ENCODE measurements at regions of chr1 and their contacts with region 1.

Region 1: DNA sequence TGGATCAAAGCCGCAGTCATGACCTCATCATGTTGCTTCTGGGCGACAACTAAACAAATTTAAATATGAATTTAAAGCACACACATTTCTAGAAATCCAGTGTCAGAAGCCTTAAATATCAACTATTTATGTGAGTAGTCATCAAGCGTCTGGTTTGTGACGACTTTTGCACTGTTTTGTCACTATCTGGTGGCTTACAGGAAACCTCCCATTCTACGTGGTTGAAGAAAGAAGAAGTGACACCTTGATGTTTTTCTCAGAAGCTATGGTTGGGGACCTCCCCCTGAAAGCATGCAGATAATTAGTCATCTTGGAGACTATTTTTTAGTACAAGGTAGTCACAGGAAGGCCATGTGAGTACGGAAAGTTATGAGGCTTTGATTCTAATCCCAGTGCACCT is 58.5 kb downstream of the TENT5C start:
- DNase-seq: peak in 8 of 9 donors; percentile 49 to 87 (median 83)
- ATAC-seq: peak; percentile 88
- H3K4me3 ChIP-seq: peak overlapping the region; percentile 5
- H3K4me3 Mint-ChIP-seq: peak overlapping the region in 7 of 10 donors; percentile 19 to 60 (median 37)
- H3K27ac ChIP-seq: no peak overlapping the region
- H3K27ac Mint-ChIP-seq: peak overlapping the region; percentile 74 to 97 (median 93)
- H3K4me1 ChIP-seq: peaks cover 38 to 71% of the 10 kb centered on the region in 2 donors
- H3K4me1 Mint-ChIP-seq: peaks cover 35 to 81% (median 66%) of the 10 kb centered on the region in 7 donors
- H3K27me3 ChIP-seq: no peaks in the 10 kb centered on the region
- H3K27me3 Mint-ChIP-seq: peaks cover 0 to 15% (median 4%) of the 10 kb centered on the region in 5 donors

Region 2: GRCh38 chr1:116667575-116668105 is 996.7 kb before region 1 on chr1 and contains the start of gene IGSF3:
- CTCF ChIA-PET with region 1: no interaction called
- POLR2A ChIA-PET with region 1: no interaction called
- intact Hi-C with region 1: no loop called
- DNase-seq: peak in 1 of 9 donors; percentile 66
- ATAC-seq: peak; percentile 80
- H3K4me3 ChIP-seq: peak within 1 kb of the TSS; percentile 51
- H3K4me3 Mint-ChIP-seq: peak within 1 kb of the TSS; percentile 81 to 85 (median 84)
- H3K27ac ChIP-seq: no peak within 1 kb of the TSS
- H3K27ac Mint-ChIP-seq: peak within 1 kb of the TSS in 1 of 9 donors; percentile 38
- H3K4me1 ChIP-seq: peaks cover 0 to 11% of the 10 kb centered on the region in 2 donors
- H3K4me1 Mint-ChIP-seq: peaks cover 5 to 14% (median 11%) of the 10 kb centered on the region in 7 donors
- H3K27me3 ChIP-seq: peaks cover 0 to 9% of the 10 kb centered on the region in 2 donors
- H3K27me3 Mint-ChIP-seq: peaks cover 53 to 78% (median 59%) of the 10 kb centered on the region in 5 donors
- total RNA-seq, gene IGSF3: 0.08 to 0.63 (median 0.24) TPM in 3 of 5 experiments, not detected in the others

Region 3: GRCh38 chr1:116763787-116764465 is 900.4 kb before region 1 on chr1:
- CTCF ChIA-PET with region 1: no interaction called
- POLR2A ChIA-PET with region 1: no interaction called
- intact Hi-C with region 1: loop called in 1 of 2 experiments (anchors 2 kb)
- DNase-seq: peak in 2 of 9 donors; percentile 64 to 66
- ATAC-seq: peak; percentile 10
- H3K4me3 ChIP-seq: peak overlapping the region; percentile 17
- H3K4me3 Mint-ChIP-seq: peak overlapping the region; percentile 79 to 99 (median 85)
- H3K27ac ChIP-seq: peak overlapping the region; percentile 89
- H3K27ac Mint-ChIP-seq: peak overlapping the region; percentile 93 to 100 (median 97)
- H3K4me1 ChIP-seq: peaks cover 94 to 100% of the 10 kb centered on the region in 2 donors
- H3K4me1 Mint-ChIP-seq: peaks cover 74 to 100% (median 94%) of the 10 kb centered on the region in 7 donors
- H3K27me3 ChIP-seq: no peaks in the 10 kb centered on the region
- H3K27me3 Mint-ChIP-seq: no peaks in the 10 kb centered on the region

Region 4: DNA sequence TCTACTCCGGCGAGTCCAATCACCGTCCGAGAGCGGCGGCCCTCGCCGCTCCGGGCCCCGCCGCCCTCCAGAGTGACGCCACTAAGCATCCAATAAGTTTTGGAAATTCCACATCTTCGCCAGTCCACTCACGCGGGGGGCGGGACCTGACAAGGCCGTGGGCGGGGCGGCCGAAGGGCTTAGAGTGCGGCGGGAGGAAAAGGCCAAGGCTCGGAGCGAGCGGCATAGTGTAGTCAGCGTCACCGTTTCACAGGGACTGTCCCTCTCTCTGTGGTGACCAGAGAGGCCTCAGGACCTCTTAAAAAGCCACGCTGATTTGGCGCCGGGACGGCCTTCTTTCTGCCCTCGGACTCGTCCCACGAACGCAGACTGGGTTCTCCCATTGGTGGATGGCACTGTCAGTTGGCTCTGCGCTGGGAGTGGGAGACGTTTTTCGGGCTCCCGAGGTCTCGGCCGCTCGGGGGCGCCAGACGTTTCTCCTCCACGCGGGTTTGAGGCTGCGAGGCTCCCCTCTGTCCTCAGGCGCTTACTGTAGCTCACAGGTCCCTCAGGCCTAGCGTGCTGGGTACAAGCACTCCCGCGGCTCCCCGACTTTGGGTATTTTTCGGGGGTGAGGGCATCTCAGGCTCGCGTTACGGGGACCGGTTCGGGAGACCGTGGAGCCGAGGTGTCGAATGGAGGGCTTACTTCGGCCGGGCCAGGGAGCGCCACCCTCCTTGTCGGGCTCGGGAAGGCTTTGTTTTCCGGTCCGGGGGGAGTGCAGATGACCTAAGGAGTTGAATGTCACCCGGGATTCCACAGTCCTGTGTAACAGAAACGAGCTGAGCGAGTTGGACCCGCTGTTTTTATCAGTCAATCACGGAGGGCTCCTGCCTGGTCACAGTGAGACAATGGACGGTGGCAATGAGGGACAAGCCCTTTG is 542.3 kb before region 1 on chr1:
- CTCF ChIA-PET with region 1: no interaction called
- POLR2A ChIA-PET with region 1: no interaction called
- intact Hi-C with region 1: loop called in 1 of 2 experiments (anchors 10 kb)
- DNase-seq: peak; percentile 64 to 81 (median 74)
- ATAC-seq: peak; percentile 90
- H3K4me3 ChIP-seq: peak overlapping the region; percentile 97
- H3K4me3 Mint-ChIP-seq: peak overlapping the region; percentile 83 to 90 (median 87)
- H3K27ac ChIP-seq: peak overlapping the region; percentile 61
- H3K27ac Mint-ChIP-seq: peak overlapping the region in 2 of 9 donors; percentile 16 to 53
- H3K4me1 ChIP-seq: peaks cover 0 to 4% of the 10 kb centered on the region in 2 donors
- H3K4me1 Mint-ChIP-seq: peaks cover 0 to 13% (median 4%) of the 10 kb centered on the region in 7 donors
- H3K27me3 ChIP-seq: no peaks in the 10 kb centered on the region
- H3K27me3 Mint-ChIP-seq: peaks cover 5 to 21% (median 6%) of the 10 kb centered on the region in 5 donors

Region 5: DNA sequence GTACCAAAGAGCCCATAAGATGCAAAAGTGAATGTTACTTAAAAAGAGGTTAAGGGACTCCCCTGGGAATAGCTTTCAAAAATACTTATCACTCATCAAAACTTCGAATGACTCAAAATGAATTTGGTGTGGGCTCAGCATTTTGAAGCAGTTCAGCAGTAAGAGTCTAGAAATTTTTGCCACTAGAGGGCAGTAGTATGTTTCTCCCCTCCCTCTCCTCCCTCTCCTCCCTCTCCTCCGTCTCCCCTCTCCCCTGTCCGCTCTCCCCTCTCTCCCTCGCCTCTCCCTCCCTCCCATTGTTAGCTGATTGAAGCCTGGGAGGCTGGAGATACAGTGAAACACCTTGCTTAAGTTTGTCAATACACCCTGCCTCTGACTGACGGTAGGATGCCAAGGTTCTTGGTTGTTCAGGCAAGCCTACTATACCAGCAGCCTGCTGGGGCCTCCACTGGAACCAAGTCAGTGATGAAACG is 129.3 kb before region 1 on chr1:
- CTCF ChIA-PET with region 1: interaction called, 118 read pairs
- POLR2A ChIA-PET with region 1: interaction called, 3 read pairs
- intact Hi-C with region 1: no loop called
- DNase-seq: peak; percentile 22 to 74 (median 60)
- ATAC-seq: peak; percentile 88
- H3K4me3 ChIP-seq: no peak overlapping the region
- H3K4me3 Mint-ChIP-seq: peak overlapping the region in 1 of 10 donors; percentile 17
- H3K27ac ChIP-seq: no peak overlapping the region
- H3K27ac Mint-ChIP-seq: peak overlapping the region in 4 of 9 donors; percentile 1 to 36 (median 14)
- H3K4me1 ChIP-seq: peaks cover 7 to 8% of the 10 kb centered on the region in 2 donors
- H3K4me1 Mint-ChIP-seq: peaks cover 0 to 9% (median 3%) of the 10 kb centered on the region in 7 donors
- H3K27me3 ChIP-seq: no peaks in the 10 kb centered on the region
- H3K27me3 Mint-ChIP-seq: no peaks in the 10 kb centered on the region

Region 6: GRCh38 chr1:117674521-117675397 is 10.4 kb after region 1 on chr1:
- CTCF ChIA-PET with region 1: interaction called, 7 read pairs
- POLR2A ChIA-PET with region 1: interaction called, 3 read pairs
- intact Hi-C with region 1: loop called in 1 of 2 experiments (anchors 1 kb)
- DNase-seq: peak in 7 of 9 donors; percentile 52 to 67 (median 58)
- ATAC-seq: peak; percentile 80
- H3K4me3 ChIP-seq: no peak overlapping the region
- H3K4me3 Mint-ChIP-seq: no peak overlapping the region
- H3K27ac ChIP-seq: no peak overlapping the region
- H3K27ac Mint-ChIP-seq: peak overlapping the region in 3 of 9 donors; percentile 53 to 68 (median 65)
- H3K4me1 ChIP-seq: peaks cover 0 to 5% of the 10 kb centered on the region in 2 donors
- H3K4me1 Mint-ChIP-seq: peaks cover 0 to 25% (median 4%) of the 10 kb centered on the region in 7 donors
- H3K27me3 ChIP-seq: no peaks in the 10 kb centered on the region
- H3K27me3 Mint-ChIP-seq: peaks cover 0 to 32% (median 0%) of the 10 kb centered on the region in 5 donors

Region 7: DNA sequence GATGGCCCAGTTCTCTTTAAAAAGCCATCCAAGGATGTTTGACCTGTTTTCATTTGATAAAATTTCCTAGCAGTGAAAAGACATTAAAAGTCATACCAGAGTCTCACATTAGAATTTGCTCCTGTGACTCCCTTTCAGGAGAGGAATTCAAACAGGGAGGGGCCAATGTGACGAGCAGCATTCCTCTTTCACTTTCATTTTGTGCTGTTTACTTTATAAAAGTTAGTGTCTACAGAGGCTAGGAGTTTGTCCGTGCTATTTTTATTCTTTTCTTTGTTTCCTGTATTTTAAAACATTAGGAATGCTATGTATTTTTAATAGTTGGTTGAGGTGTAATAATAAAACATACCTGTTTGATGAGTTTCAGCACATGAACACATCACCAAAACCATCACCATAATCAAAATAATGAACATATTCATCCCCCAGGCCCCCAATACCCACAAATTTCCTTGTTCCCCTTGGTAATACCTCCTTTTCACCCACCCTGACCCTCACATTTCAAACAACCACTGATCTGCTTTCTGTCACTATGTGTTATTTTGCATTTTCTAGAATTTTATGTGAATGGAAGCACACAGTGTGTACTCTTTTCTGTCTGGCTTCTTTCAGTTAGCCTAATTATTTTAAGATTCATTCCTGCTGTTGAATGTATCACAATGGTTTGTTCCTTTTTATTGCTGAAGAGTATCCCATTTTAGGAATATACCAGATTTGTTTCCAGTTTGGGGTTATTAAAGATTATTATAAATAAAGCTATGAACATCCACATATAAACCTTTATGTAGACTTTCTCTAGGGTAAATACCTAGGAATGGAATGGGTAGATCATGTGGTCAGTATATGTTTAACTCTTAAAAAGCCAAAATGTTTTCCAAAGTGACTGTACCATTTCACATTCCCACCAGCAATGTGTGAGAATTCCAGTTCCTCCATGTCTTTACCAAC is 71.0 kb after region 1 on chr1:
- CTCF ChIA-PET with region 1: no interaction called
- POLR2A ChIA-PET with region 1: no interaction called
- intact Hi-C with region 1: loop called in 1 of 2 experiments (anchors 5 kb)
- DNase-seq: peak in 7 of 9 donors; percentile 19 to 53 (median 44)
- ATAC-seq: peak; percentile 58
- H3K4me3 ChIP-seq: peak overlapping the region; percentile 59
- H3K4me3 Mint-ChIP-seq: peak overlapping the region; percentile 67 to 90 (median 81)
- H3K27ac ChIP-seq: peak overlapping the region; percentile 66
- H3K27ac Mint-ChIP-seq: peak overlapping the region; percentile 83 to 97 (median 92)
- H3K4me1 ChIP-seq: peaks cover 6 to 11% of the 10 kb centered on the region in 2 donors
- H3K4me1 Mint-ChIP-seq: peaks cover 14 to 23% (median 19%) of the 10 kb centered on the region in 7 donors
- H3K27me3 ChIP-seq: no peaks in the 10 kb centered on the region
- H3K27me3 Mint-ChIP-seq: peaks cover 0 to 11% (median 0%) of the 10 kb centered on the region in 5 donors

Region 8: DNA sequence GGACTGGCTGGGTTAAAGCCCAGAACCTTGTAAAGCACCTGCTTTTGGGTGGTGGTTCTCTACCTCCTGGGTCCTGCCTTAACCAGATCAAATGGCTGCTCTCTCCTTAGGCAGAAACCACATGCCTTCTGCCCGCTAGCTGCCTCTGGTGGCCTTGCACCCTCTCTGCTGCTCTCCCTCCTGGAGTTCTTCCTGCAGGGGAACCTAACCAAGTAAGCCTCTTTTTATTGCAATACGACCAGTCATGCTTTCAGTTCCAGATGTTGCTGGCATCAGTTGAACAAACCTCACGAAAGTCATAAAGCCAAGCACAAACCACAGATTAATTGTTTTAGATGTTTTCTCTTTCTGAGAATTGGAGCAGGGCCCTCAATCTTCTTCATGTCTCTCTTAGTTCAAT is 146.2 kb after region 1 on chr1:
- CTCF ChIA-PET with region 1: no interaction called
- POLR2A ChIA-PET with region 1: no interaction called
- intact Hi-C with region 1: no loop called
- DNase-seq: no peak
- ATAC-seq: no peak
- H3K4me3 ChIP-seq: no peak overlapping the region
- H3K4me3 Mint-ChIP-seq: no peak overlapping the region
- H3K27ac ChIP-seq: no peak overlapping the region
- H3K27ac Mint-ChIP-seq: no peak overlapping the region
- H3K4me1 ChIP-seq: no peaks in the 10 kb centered on the region
- H3K4me1 Mint-ChIP-seq: peaks cover 0 to 5% (median 0%) of the 10 kb centered on the region in 7 donors
- H3K27me3 ChIP-seq: no peaks in the 10 kb centered on the region
- H3K27me3 Mint-ChIP-seq: peaks cover 11 to 28% (median 17%) of the 10 kb centered on the region in 5 donors

Region 9: GRCh38 chr1:119140177-119141019 is 1476.1 kb after region 1 on chr1 and contains the start of gene WARS2:
- CTCF ChIA-PET with region 1: no interaction called
- POLR2A ChIA-PET with region 1: no interaction called
- intact Hi-C with region 1: loop called in 1 of 2 experiments (anchors 5 kb)
- DNase-seq: peak; percentile 78 to 97 (median 97)
- ATAC-seq: peak; percentile 93
- H3K4me3 ChIP-seq: peak within 1 kb of the TSS; percentile 97
- H3K4me3 Mint-ChIP-seq: no peak within 1 kb of the TSS
- H3K27ac ChIP-seq: peak within 1 kb of the TSS; percentile 98
- H3K27ac Mint-ChIP-seq: no peak within 1 kb of the TSS
- H3K4me1 ChIP-seq: peaks cover 12 to 25% of the 10 kb centered on the region in 2 donors
- H3K4me1 Mint-ChIP-seq: peaks cover 17 to 38% (median 27%) of the 10 kb centered on the region in 7 donors
- H3K27me3 ChIP-seq: no peaks in the 10 kb centered on the region
- H3K27me3 Mint-ChIP-seq: no peaks in the 10 kb centered on the region
- total RNA-seq, gene WARS2: 8.6 to 27.1 (median 12.9) TPM

Measured in naive thymus-derived CD4-positive, alpha-beta T cell (primary cell).